Activated B cell treated with CpG ODN at 0.5 μM for 24 hours (primary cell): ENCODE measurements at regions of chr22 and their contacts with region 1.

Region 1: GRCh38 chr22:25702040-25702439 is 39.9 kb upstream of the MYO18B start:
- DNase-seq: no peak
- ATAC-seq: no peak
- H3K4me3 Mint-ChIP-seq: no peak overlapping the region
- H3K27ac Mint-ChIP-seq: no peak overlapping the region
- H3K4me1 Mint-ChIP-seq: peaks cover 9% of the 10 kb centered on the region
- H3K27me3 Mint-ChIP-seq: no peaks in the 10 kb centered on the region
- CTCF ChIP-seq: no peak

Region 2: DNA sequence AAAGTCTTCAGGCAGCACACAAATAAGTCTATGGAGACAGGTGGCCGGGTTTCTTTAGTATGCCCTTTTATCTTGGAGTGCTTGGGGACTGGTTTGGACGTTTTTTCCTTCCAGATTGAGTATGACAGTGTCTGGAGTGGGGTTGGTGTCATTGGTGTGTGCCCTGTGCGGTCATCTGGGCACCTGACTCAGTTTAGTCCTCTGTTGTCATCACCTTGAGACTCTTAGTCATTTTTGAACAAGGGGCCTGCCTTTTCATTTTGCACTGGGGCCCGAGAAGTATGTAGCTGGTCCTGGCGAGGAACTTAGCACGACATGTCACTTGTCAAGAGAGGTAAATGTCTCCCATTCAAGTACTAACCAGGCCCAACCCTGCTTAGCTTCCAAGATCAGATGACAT is 12.7 kb after region 1 on chr22:
- CTCF ChIA-PET with region 1: no interaction called
- POLR2A ChIA-PET with region 1: no interaction called
- intact Hi-C with region 1: loop called (anchors 1 kb)
- DNase-seq: no peak
- ATAC-seq: no peak
- H3K4me3 Mint-ChIP-seq: no peak overlapping the region
- H3K27ac Mint-ChIP-seq: no peak overlapping the region
- H3K4me1 Mint-ChIP-seq: no peaks in the 10 kb centered on the region
- H3K27me3 Mint-ChIP-seq: no peaks in the 10 kb centered on the region
- CTCF ChIP-seq: no peak

Region 3: GRCh38 chr22:25777870-25778269 is 75.8 kb after region 1 on chr22:
- CTCF ChIA-PET with region 1: interaction called, 4 read pairs
- POLR2A ChIA-PET with region 1: no interaction called
- intact Hi-C with region 1: loop called (anchors 5 kb)
- DNase-seq: no peak
- ATAC-seq: no peak
- H3K4me3 Mint-ChIP-seq: no peak overlapping the region
- H3K27ac Mint-ChIP-seq: no peak overlapping the region
- H3K4me1 Mint-ChIP-seq: peaks cover 3% of the 10 kb centered on the region
- H3K27me3 Mint-ChIP-seq: peaks cover 6% of the 10 kb centered on the region
- CTCF ChIP-seq: no peak